Testis (tissue), 5 donors: ENCODE measurements at regions of chr1 and their contacts with region 1.

Region 1: GRCh38 chr1:26787706-26788514 is at the start of gene PIGV:
- DNase-seq: peak; percentile 91
- H3K4me3 ChIP-seq: peak within 1 kb of the TSS; percentile 81 to 90
- H3K27ac ChIP-seq: peak within 1 kb of the TSS; percentile 100
- H3K4me1 ChIP-seq: peaks cover 48% of the 10 kb centered on the region
- H3K27me3 ChIP-seq: no peaks in the 10 kb centered on the region
- CTCF ChIP-seq: peak in 2 of 3 experiments; percentile 34 to 46
- POLR2A ChIP-seq: peak; percentile 54
- total RNA-seq, gene PIGV: 47.6 to 52.5 TPM

Region 2: DNA sequence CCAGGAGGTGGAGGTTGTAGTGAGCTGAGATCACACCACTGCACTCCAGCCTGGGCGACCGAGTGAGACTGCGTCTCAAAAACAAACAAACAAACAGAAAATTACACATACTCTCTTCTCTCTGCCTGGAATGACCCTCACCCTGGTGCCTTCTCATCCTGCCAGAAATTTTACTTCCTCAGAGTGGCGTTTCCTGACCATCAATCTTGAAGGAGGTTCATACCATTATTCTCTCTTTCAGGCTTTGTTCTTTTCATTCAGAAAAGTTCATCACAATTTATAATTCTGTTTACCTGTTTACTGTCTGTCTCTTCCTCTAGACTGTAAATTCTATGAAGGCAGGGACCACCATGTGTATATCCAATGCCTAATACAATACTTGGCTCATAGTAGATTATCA is 179.0 kb before region 1 on chr1:
- intact Hi-C with region 1: loop called (anchors 5 kb)
- DNase-seq: no peak
- H3K4me3 ChIP-seq: no peak overlapping the region
- H3K27ac ChIP-seq: no peak overlapping the region
- H3K4me1 ChIP-seq: no peaks in the 10 kb centered on the region
- H3K27me3 ChIP-seq: no peaks in the 10 kb centered on the region
- CTCF ChIP-seq: no peak
- POLR2A ChIP-seq: no peak

Region 3: DNA sequence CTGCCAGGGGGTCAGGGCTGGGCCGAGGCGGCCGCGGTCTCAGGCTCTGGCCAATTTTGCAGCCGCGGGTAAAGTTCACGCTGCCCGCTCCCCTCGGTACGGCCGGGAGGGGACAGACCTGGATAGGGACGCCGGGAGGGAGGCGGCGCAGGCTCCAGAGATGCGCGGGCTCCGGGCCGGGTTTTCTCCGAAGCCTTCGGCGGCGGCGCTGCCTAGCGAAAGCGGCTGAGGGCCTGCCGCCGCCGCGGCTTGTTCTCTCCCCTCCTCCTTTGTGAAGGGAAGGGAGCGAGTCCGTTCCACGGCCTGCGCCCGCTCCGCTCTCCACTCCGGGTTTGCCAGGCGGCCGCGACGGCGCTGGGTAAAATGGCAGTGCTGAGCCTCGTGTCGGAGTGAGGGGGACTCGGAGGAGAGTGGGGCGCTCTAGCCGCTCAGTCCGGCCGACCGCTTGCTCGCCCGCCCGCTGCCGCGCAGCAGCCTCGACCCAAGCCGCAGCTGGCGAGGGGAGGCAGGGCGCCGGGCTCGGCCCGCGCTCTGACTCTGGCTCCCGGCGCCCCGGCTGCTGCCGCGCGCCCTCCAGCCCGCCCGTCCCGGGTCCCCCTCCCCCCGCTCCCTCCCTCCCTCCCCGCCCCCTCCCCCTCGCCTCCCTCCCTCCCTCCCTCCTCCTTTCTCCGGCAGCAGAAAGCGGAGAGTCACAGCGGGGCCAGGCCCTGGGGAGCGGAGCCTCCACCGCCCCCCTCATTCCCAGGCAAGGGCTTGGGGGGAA is 92.4 kb before region 1 on chr1 and contains the start of gene ARID1A:
- intact Hi-C with region 1: loop called (anchors 5 kb)
- DNase-seq: peak; percentile 94
- H3K4me3 ChIP-seq: peak within 1 kb of the TSS; percentile 98 to 99
- H3K27ac ChIP-seq: peak within 1 kb of the TSS; percentile 97 to 99
- H3K4me1 ChIP-seq: peaks cover 49% of the 10 kb centered on the region
- H3K27me3 ChIP-seq: no peaks in the 10 kb centered on the region
- CTCF ChIP-seq: peak in 2 of 3 experiments; percentile 24 to 37
- POLR2A ChIP-seq: no peak
- total RNA-seq, gene ARID1A: 106 to 119 TPM

Region 4: DNA sequence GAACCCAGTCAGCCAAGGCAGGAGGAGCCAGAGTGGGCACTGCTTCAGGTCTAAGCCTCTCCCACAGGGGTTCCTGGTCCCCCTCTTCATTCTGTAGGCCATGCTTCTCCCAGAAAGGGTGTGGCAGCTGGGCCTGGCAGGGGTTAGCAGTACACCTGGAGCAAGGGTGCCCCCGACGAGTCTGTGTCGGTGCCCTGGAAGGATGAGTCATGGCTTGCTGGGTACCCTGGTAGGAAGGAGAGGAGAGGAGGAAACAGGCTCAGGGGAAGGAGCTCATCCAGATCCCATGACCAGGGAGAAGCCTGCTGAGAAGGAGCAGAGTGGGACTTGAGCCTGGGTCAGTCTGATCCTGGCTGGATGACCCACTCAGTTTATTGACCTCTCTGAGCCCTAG is 162.0 kb after region 1 on chr1:
- intact Hi-C with region 1: no loop called
- DNase-seq: no peak
- H3K4me3 ChIP-seq: no peak overlapping the region
- H3K27ac ChIP-seq: no peak overlapping the region
- H3K4me1 ChIP-seq: peaks cover 28% of the 10 kb centered on the region
- H3K27me3 ChIP-seq: no peaks in the 10 kb centered on the region
- CTCF ChIP-seq: no peak
- POLR2A ChIP-seq: no peak